Gastrocnemius medialis (tissue), 4 donors: ENCODE measurements at regions of chr14 and their contacts with region 1.

Region 1: DNA sequence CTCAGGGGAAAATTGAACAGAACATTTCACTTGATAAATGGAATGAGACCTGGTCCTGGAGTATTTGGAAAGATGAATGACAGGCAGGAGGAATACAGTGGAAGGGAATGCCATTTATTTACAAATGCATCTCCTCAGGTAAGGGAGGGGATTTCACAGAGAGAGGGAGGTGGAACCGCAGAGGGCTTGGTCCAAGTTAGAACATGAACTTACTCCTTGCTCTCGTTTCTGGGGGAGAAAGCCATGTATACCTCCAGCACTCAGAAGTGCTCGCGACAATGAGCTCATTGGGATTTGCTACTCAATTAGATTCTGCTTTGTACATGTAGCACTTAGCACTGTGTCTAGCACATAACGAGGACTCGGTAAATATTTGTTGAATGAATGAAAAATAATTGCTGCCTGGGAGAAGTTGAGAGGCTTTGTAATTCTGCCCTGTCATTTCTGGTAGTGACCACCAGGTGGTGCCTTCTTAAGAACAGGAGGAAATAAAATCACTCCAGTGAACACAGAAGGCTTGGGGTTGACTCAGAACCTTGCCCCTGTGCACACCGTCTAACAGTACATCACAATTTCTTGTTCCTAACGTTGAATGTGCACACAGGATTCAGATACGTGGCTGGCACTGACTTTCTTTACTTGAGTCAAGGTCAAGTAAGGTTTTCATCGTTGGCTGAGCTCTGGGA is 91.6 kb downstream of the RGS6 start:
- DNase-seq: no peak
- ATAC-seq: no peak
- H3K4me3 ChIP-seq: no peak overlapping the region
- H3K27ac ChIP-seq: no peak overlapping the region
- H3K4me1 ChIP-seq: no peaks in the 10 kb centered on the region
- H3K27me3 ChIP-seq: no peaks in the 10 kb centered on the region
- CTCF ChIP-seq: peak in 3 of 5 experiments; percentile 32 to 41 (median 37)
- POLR2A ChIP-seq: no peak

Region 2: GRCh38 chr14:72291908-72292688 is 268.2 kb after region 1 on chr14:
- in situ Hi-C with region 1: loop called in 1 of 4 experiments (anchors 5 kb)
- intact Hi-C with region 1: no loop called
- DNase-seq: no peak
- ATAC-seq: peak in 1 of 2 donors; percentile 61
- H3K4me3 ChIP-seq: no peak overlapping the region
- H3K27ac ChIP-seq: peak overlapping the region in 1 of 4 donors; percentile 43
- H3K4me1 ChIP-seq: no peaks in the 10 kb centered on the region
- H3K27me3 ChIP-seq: no peaks in the 10 kb centered on the region
- CTCF ChIP-seq: peak in 4 of 5 experiments; percentile 19 to 54 (median 40)
- POLR2A ChIP-seq: no peak

Region 3: GRCh38 chr14:73988065-73988464 is 1964.2 kb after region 1 on chr14:
- in situ Hi-C with region 1: no loop called
- intact Hi-C with region 1: no loop called
- DNase-seq: no peak
- ATAC-seq: no peak
- H3K4me3 ChIP-seq: no peak overlapping the region
- H3K27ac ChIP-seq: no peak overlapping the region
- H3K4me1 ChIP-seq: no peaks in the 10 kb centered on the region
- H3K27me3 ChIP-seq: no peaks in the 10 kb centered on the region
- CTCF ChIP-seq: no peak
- POLR2A ChIP-seq: no peak